ENCODE measurements at regions of chr15 and their contacts with region 1.

Region 1: DNA sequence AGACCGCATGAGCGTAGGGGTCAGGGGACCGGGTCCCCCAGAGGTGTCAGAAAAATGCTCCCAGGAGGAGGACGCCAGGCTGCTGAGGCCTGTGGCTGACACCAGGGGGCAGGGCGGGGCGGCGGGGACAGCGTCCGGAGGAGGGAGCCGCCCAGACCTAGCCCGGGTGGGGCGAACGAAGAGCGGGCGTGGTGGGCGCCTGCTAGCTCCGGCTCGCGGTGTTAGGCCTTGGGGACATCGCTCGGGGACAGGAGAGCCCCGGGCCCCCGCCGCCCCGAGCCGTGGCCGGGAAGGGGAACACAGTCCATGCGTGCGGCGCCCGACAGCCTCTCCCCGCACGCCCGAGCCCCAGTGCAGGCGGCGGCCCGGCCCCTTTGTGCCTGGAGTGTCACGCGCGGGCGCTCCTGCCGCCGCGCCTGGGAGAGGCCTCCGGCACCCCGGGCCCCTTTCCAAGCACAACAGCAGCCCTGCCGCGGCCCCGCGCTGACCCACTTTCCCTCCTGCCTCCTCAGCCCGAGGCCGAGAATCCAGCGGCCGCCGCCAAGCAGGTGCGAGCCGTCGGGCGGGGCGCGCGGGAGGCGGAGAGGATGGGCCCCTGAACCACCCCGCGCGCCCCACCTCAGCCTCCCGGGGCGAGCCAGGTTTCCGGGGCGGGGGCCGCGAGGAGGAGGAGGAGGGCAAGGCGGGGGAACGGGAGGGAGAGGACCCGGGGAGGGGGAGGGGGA is 111.0 kb upstream of the KLF13 start:
- DNase-seq: peak; percentile 54
- ATAC-seq: peak; percentile 87
- H3K4me3 ChIP-seq: peak overlapping the region; percentile 54 to 68 (median 66); a peak in 5 of 6 replicates
- H3K27ac ChIP-seq: peak overlapping the region; percentile 85
- H3K4me1 ChIP-seq: peaks cover 22% of the 10 kb centered on the region
- H3K27me3 ChIP-seq: no peaks in the 10 kb centered on the region
- CTCF ChIP-seq: peak; percentile 92
- EP300 ChIP-seq: no peak
- POLR2A ChIP-seq: 0 out of 4 replicates have a peak, but pooled peaks of 1 of the 2 experiments have one; percentile 53
- RAD21 ChIP-seq: peak; percentile 93

Region 2: DNA sequence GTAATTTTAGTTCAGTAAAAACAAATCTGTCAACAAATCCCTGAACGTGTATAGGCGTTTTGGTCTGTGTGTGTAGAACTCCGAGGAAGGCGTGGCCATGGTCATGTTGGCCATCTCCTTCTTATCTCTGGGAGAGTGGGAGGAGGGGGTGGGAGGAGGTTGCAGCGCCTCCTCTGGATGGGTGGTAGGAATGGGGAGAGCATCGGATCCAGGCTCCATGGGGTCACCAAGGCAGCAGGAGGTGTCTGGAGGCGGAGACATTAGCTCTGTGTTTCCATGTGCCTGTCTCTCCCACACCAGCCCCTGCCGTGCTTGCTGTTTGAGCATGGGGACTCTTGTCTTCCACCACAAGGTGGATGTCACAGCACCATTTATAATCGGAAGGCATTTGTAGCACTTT is 79.6 kb before region 1 on chr15:
- CTCF ChIA-PET with region 1: no interaction called
- POLR2A ChIA-PET with region 1: no interaction called
- in situ Hi-C with region 1: no loop called
- intact Hi-C with region 1: no loop called
- DNase-seq: peak; percentile 28
- ATAC-seq: peak; percentile 86
- H3K4me3 ChIP-seq: no peak overlapping the region
- H3K27ac ChIP-seq: no peak overlapping the region
- H3K4me1 ChIP-seq: peaks cover 13% of the 10 kb centered on the region
- H3K27me3 ChIP-seq: 0 out of 5 replicates have a peak, but pooled peaks cover 0 to 1% of the 10 kb centered on the region in 2 experiments
- CTCF ChIP-seq: peak; percentile 46
- EP300 ChIP-seq: no peak
- POLR2A ChIP-seq: no peak
- RAD21 ChIP-seq: no peak

Region 3: DNA sequence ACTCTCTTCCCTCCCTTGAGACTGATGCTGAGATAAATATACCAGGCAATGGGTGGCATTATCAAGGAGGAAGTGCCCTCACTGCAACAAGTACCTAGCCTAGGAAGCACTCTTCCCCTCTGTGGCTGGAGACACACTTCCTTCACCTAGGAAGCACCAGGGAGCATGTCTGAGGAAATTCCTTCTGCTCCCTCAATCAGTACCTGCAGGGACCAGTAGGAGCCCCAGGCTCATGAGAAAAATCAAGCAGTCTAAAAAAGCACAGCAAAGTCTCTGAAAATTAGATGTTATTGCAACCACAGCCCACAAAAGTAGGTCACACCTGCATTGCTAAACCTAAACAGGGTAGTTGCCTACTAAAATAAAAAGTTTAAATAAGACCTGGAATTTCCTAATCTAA is 36.0 kb before region 1 on chr15:
- CTCF ChIA-PET with region 1: no interaction called
- POLR2A ChIA-PET with region 1: no interaction called
- in situ Hi-C with region 1: no loop called
- intact Hi-C with region 1: no loop called
- DNase-seq: no peak
- ATAC-seq: peak; percentile 74
- H3K4me3 ChIP-seq: no peak overlapping the region
- H3K27ac ChIP-seq: no peak overlapping the region
- H3K4me1 ChIP-seq: peaks cover 22% of the 10 kb centered on the region
- H3K27me3 ChIP-seq: no peaks in the 10 kb centered on the region
- CTCF ChIP-seq: no peak
- EP300 ChIP-seq: no peak
- POLR2A ChIP-seq: no peak
- RAD21 ChIP-seq: no peak

Region 4: DNA sequence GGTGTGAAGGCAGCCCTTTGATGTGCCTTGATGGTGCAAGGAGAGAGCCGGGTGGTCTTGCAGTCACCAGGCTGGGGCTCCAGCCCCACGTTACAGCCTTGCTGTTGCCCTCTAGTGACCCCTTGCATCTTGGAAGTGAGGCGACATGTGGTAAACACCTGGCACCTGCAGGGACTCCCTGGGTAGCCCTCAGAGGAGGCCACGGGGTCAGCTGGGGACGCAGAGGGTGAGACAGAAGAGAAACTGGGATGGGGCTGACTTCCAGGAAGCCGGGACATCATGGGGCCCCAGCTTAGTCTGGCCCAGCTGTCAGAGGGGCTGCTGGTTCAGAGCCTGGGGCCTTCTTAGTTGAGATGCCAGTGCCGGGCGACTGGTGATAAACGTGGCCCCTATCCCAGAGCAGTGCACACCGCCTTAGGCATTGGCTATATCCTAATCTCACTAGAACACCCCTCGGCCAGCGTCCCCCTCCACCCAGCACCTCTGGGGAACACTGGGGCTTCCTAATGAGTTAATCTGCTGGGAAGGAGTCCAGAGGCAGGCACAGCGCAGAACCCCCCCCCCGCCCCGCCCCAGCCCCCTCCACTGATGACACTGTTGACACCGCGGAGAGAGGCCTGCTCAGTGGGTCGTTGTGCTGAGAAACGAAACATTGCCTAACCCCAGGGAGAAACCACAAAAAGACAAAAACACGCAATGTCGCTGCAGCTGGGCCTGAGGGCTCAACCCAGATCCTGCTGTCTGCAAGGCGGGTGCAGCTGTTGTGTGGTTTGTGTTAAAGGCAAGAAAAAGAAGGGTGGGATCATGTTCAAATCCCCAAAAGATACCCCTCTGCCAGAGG is 50.4 kb after region 1 on chr15:
- CTCF ChIA-PET with region 1: no interaction called
- POLR2A ChIA-PET with region 1: interaction called, 10 read pairs
- in situ Hi-C with region 1: no loop called
- intact Hi-C with region 1: no loop called
- DNase-seq: no peak
- ATAC-seq: peak; percentile 41
- H3K4me3 ChIP-seq: peak overlapping the region; percentile 24 to 69 (median 34); a peak in 5 of 6 replicates
- H3K27ac ChIP-seq: peak overlapping the region; percentile 77
- H3K4me1 ChIP-seq: peaks cover 76% of the 10 kb centered on the region
- H3K27me3 ChIP-seq: 0 out of 5 replicates have a peak, but pooled peaks cover 0 to 1% of the 10 kb centered on the region in 2 experiments
- CTCF ChIP-seq: no peak
- EP300 ChIP-seq: no peak
- POLR2A ChIP-seq: no peak
- RAD21 ChIP-seq: no peak

Region 5: GRCh38 chr15:31326156-31326732 is 110.6 kb after region 1 on chr15:
- CTCF ChIA-PET with region 1: no interaction called
- POLR2A ChIA-PET with region 1: interaction called, 17 read pairs
- in situ Hi-C with region 1: no loop called
- intact Hi-C with region 1: loop called (anchors 1 kb)
- DNase-seq: peak; percentile 89
- ATAC-seq: peak; percentile 83
- H3K4me3 ChIP-seq: peak overlapping the region; percentile 79 to 90 (median 89)
- H3K27ac ChIP-seq: peak overlapping the region; percentile 82
- H3K4me1 ChIP-seq: peaks cover 47% of the 10 kb centered on the region
- H3K27me3 ChIP-seq: peaks cover 0 to 3% of the 10 kb centered on the region in 2 experiments; a peak in 1 of 5 replicates
- CTCF ChIP-seq: no peak; the same call in 1 of the 2 replicates
- EP300 ChIP-seq: no peak
- POLR2A ChIP-seq: 0 out of 4 replicates have a peak, but pooled peaks of 1 of the 2 experiments have one; percentile 35
- RAD21 ChIP-seq: peak; percentile 41; the same call in 1 of the 2 replicates

Region 6: DNA sequence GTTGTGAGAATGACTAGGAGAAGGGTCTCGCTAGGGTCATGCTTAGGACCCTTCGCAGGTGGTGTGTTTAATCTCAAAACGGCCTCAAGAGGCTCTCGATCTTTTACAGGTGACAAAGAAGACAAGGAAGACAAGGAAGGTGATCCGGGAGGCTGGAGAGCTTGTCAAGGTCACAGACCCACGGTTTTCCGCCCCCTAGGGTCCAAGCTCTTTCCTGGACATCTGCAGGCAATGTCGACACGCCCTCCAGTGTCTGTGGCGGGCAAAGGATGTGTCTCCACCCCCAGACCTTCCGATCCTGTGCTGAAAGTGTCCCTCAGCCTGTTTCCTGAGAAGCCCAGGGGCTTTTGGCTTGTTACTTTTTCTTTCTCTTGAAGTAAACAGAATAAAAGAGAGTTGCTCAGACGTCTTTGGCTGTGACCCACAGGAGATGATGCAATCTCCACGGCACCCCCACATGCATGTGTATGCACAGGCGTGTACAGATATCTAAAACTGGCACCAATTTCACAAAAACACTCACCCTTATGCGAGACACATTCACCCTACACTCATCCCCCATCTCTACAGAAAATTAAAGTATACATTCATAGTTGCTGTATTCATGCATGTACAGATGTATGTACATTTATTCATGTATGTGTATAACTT is 219.7 kb after region 1 on chr15:
- CTCF ChIA-PET with region 1: interaction called, 19 read pairs
- POLR2A ChIA-PET with region 1: interaction called, 12 read pairs
- in situ Hi-C with region 1: no loop called
- intact Hi-C with region 1: no loop called
- DNase-seq: peak; percentile 75
- ATAC-seq: peak; percentile 90
- H3K4me3 ChIP-seq: peak overlapping the region in 1 of 3 experiments; percentile 20; a peak in 1 of 6 replicates
- H3K27ac ChIP-seq: no peak overlapping the region
- H3K4me1 ChIP-seq: peaks cover 12% of the 10 kb centered on the region
- H3K27me3 ChIP-seq: peaks cover 0 to 8% of the 10 kb centered on the region in 2 experiments; a peak in 2 of 5 replicates
- CTCF ChIP-seq: peak; percentile 96
- EP300 ChIP-seq: no peak
- POLR2A ChIP-seq: no peak
- RAD21 ChIP-seq: peak; percentile 86

Measured in HepG2 (cell line).